ENCODE measurements at regions of chr2 and their contacts with region 1.

Region 1: GRCh38 chr2:143110758-143111428 is 18.3 kb upstream of the ARHGAP15 start:
- DNase-seq: peak; percentile 36 to 91
- ATAC-seq: peak; percentile 85 to 87 (median 86)
- H3K4me3 ChIP-seq: no peak overlapping the region
- H3K4me3 Mint-ChIP-seq: no peak overlapping the region
- H3K27ac ChIP-seq: no peak overlapping the region
- H3K27ac Mint-ChIP-seq: peak overlapping the region; percentile 12 to 84
- H3K4me1 ChIP-seq: no peaks in the 10 kb centered on the region
- H3K4me1 Mint-ChIP-seq: peaks cover 6 to 7% of the 10 kb centered on the region in 2 donors
- H3K27me3 ChIP-seq: no peaks in the 10 kb centered on the region
- H3K27me3 Mint-ChIP-seq: peaks cover 2 to 7% of the 10 kb centered on the region in 2 donors
- CTCF ChIP-seq: peak; percentile 90

Region 2: GRCh38 chr2:143034292-143035074 is 76.4 kb before region 1 on chr2:
- intact Hi-C with region 1: loop called (anchors 2 kb)
- DNase-seq: peak; percentile 26 to 89
- ATAC-seq: peak; percentile 99 to 100 (median 100)
- H3K4me3 ChIP-seq: no peak overlapping the region
- H3K4me3 Mint-ChIP-seq: no peak overlapping the region
- H3K27ac ChIP-seq: no peak overlapping the region
- H3K27ac Mint-ChIP-seq: no peak overlapping the region
- H3K4me1 ChIP-seq: no peaks in the 10 kb centered on the region
- H3K4me1 Mint-ChIP-seq: no peaks in the 10 kb centered on the region
- H3K27me3 ChIP-seq: no peaks in the 10 kb centered on the region
- H3K27me3 Mint-ChIP-seq: no peaks in the 10 kb centered on the region
- CTCF ChIP-seq: peak; percentile 100

Region 3: DNA sequence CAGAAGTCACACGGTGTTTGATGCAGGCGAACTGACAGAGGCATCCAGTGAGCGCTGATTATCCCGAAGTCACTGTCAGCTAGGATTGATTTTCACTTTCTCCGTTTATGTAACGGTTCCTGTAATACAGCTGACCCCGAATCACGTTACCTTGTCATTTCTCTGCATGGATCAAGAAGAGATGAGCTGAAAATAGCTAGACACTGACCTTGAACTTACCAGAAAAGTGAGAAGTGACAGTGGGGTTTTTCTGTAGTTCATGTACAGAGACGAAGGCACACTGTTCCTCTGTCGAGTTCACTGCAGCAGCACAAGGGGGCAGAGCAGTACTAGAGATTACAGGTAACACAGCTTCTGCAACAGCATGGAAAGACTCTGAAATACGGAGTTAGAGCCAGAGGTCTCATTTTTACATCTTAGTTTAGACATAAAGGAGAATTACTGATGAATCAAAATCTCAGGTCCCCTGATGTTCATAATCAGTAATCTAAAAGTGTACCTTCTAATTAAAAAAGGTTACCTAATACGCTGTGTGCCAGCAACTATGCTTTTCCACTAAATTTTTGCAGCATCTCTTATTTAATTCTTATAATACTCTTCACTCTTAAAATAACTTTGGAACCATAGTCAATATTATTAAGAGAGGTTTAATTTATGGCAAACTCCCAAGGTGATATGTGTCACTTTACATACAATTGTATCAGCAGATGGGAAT is 51.4 kb after region 1 on chr2:
- intact Hi-C with region 1: loop called (anchors 2 kb)
- DNase-seq: peak in 1 of 2 donors; percentile 85
- ATAC-seq: peak; percentile 84 to 95 (median 92)
- H3K4me3 ChIP-seq: no peak overlapping the region
- H3K4me3 Mint-ChIP-seq: no peak overlapping the region
- H3K27ac ChIP-seq: no peak overlapping the region
- H3K27ac Mint-ChIP-seq: peak overlapping the region; percentile 37 to 78
- H3K4me1 ChIP-seq: peaks cover 4% of the 10 kb centered on the region
- H3K4me1 Mint-ChIP-seq: peaks cover 80 to 82% of the 10 kb centered on the region in 2 donors
- H3K27me3 ChIP-seq: no peaks in the 10 kb centered on the region
- H3K27me3 Mint-ChIP-seq: no peaks in the 10 kb centered on the region
- CTCF ChIP-seq: peak; percentile 40